GM12878 (cell line): ENCODE measurements at regions of chrX and their contacts with region 1.

Region 1: DNA sequence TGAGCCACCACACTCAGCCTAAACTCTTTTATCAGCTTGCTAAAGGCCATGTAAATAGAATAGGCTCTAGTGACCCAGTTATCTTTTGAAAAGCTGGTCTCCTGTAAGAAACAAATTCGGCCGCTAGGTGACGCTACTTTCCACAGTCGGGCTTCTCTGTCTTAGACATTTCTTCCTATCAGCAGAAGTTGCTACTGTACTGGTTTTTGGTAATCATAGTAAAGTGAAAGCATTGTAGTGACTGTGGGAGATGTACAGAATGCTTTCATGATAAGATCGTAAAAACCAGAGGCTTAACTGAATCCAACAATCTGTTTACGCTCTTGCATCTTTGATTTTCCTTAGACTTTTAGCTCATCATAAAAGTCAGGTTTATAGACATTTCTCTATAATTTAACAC is 82.6 kb downstream of the GK start:
- DNase-seq: peak; percentile 35
- ATAC-seq: peak; percentile 97
- H3K4me3 ChIP-seq: no peak overlapping the region
- H3K27ac ChIP-seq: no peak overlapping the region
- H3K4me1 ChIP-seq: no peaks in the 10 kb centered on the region
- H3K27me3 ChIP-seq: no peaks in the 10 kb centered on the region
- CTCF ChIP-seq: peak; percentile 83 to 88 (median 88)
- EP300 ChIP-seq: no peak
- POLR2A ChIP-seq: no peak
- RAD21 ChIP-seq: peak; percentile 91

Region 2: DNA sequence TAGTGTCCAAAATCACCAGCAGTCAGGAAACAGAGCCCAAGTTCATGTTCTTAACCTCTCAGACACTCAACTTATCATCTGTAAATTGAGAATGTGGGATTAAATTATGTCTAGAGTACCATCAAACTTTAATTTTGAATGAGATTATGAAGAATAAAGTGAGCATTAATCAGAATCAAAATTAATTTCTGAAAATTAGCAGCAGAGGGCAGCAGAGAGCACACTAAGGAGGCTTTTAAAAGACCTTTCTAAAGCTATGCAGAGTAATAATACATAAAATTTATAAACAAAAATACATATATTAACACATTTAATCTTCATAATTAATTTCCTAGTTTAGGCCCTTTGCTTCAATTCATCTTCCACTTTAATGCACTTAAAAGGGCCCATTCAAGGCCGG is 165.3 kb before region 1 on chrX:
- CTCF ChIA-PET with region 1: interaction called, 11 read pairs
- POLR2A ChIA-PET with region 1: no interaction called
- RAD21 ChIA-PET with region 1: interaction called, 7 read pairs
- SMC1A ChIA-PET with region 1: interaction called, 11 read pairs
- in situ Hi-C with region 1: no loop called
- intact Hi-C with region 1: no loop called
- DNase-seq: no peak
- ATAC-seq: peak; percentile 3; the same call in 1 of the 3 replicates
- H3K4me3 ChIP-seq: no peak overlapping the region
- H3K27ac ChIP-seq: no peak overlapping the region
- H3K4me1 ChIP-seq: peaks cover 19% of the 10 kb centered on the region
- H3K27me3 ChIP-seq: no peaks in the 10 kb centered on the region
- CTCF ChIP-seq: peak; percentile 33 to 57 (median 44); a peak in 5 of 6 replicates
- EP300 ChIP-seq: no peak
- POLR2A ChIP-seq: no peak
- RAD21 ChIP-seq: peak; percentile 65

Region 3: GRCh38 chrX:30713061-30713525 is 22.7 kb before region 1 on chrX:
- CTCF ChIA-PET with region 1: interaction called, 17 read pairs
- POLR2A ChIA-PET with region 1: no interaction called
- RAD21 ChIA-PET with region 1: interaction called, 4 read pairs
- SMC1A ChIA-PET with region 1: interaction called, 3 read pairs
- in situ Hi-C with region 1: no loop called
- intact Hi-C with region 1: no loop called
- DNase-seq: peak; percentile 85
- ATAC-seq: peak; percentile 94
- H3K4me3 ChIP-seq: no peak overlapping the region
- H3K27ac ChIP-seq: peak overlapping the region; percentile 51
- H3K4me1 ChIP-seq: peaks cover 13% of the 10 kb centered on the region
- H3K27me3 ChIP-seq: no peaks in the 10 kb centered on the region
- CTCF ChIP-seq: peak; percentile 27 to 40 (median 31); a peak in 5 of 6 replicates
- EP300 ChIP-seq: peak; percentile 95 to 97
- POLR2A ChIP-seq: no peak
- RAD21 ChIP-seq: peak; percentile 46; the same call in 1 of the 2 replicates

Region 4: DNA sequence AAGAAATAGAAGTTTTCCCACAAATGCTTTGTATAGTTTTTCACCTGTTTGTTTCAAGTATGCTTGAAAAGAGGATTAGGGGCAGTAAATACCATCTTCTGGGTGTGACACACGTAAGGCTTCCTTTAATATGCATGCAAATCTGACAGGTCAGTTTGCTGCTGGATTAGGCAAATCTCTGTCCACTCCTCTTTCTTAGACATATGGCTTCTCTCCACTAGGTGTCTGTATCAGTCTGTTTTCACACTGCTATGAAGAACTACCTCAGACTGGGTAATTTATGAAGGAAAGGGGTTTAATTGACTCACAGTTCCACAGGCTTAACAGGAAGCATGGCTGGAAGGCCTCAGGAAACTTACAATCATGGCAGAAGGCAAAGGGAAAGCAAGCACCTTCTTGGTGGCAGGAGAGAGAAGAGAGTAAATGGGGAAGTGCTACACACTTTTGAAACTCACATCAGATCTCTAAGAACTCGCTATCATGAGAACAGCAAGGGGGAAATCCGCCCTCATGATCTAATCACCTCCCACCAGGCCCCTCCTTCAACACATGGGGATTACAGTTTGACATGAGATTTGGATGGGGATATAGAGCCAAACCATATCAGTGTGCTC is 86.3 kb after region 1 on chrX:
- CTCF ChIA-PET with region 1: interaction called, 22 read pairs
- POLR2A ChIA-PET with region 1: no interaction called
- RAD21 ChIA-PET with region 1: interaction called, 4 read pairs
- SMC1A ChIA-PET with region 1: interaction called, 6 read pairs
- in situ Hi-C with region 1: loop called (anchors 5 kb)
- intact Hi-C with region 1: loop called (anchors 1 kb)
- DNase-seq: peak; percentile 34
- ATAC-seq: peak; percentile 94
- H3K4me3 ChIP-seq: no peak overlapping the region
- H3K27ac ChIP-seq: peak overlapping the region; percentile 37; the same call in 1 of the 2 replicates
- H3K4me1 ChIP-seq: no peaks in the 10 kb centered on the region; the same call in 1 of the 2 replicates
- H3K27me3 ChIP-seq: no peaks in the 10 kb centered on the region
- CTCF ChIP-seq: 0 out of 6 replicates have a peak, but pooled peaks of 1 of the 3 experiments have one; percentile 1
- EP300 ChIP-seq: no peak
- POLR2A ChIP-seq: no peak
- RAD21 ChIP-seq: peak; percentile 18; the same call in 1 of the 2 replicates

Region 5: DNA sequence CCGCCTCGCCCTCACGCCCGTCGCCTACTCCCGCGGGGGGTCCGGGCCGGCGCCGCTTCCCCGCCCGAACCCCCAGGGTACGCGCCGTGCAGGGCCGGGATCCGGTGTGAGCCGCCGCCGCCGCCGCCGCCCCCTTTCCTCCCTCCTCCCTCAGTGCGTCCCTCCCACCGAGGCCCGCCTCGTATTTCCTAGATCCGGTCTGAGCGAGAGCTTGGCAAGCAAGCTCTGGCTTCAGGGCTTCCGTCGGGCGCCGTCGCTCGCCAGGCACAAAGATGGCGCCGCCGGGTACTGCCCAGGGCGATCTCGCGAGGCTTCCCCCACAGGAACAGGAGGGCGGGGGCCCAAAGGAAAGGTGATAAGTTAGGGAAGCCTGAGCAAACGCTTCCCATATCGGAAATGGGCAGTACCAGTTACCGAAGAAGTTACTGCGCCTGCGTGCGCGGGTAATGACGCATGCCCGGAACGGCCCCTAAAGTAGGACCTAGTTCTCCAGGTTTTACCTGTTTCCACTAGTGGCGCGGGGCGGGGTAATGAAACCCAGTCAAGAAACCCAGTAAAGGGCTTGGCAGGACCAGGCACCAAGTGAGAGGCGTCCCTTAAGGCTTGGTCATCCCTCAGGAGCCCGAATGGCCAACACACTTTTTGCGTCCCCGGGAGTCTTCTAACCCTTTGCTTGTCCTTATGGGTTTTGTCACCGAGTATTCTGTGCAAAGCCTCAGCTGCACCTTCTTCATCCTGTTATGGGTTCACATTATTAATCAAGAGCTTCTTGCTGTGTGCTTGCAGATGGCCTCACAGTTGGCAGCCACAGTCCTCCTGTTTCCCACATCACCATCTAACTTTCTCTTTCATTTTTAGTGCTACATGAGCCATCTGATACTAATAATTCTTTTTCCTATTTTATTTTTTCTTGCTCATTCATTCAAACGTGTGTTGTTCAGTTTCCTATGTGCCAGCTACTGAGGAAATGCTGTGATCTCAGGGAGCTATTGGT is 153.6 kb after region 1 on chrX and contains the start of gene TAB3:
- CTCF ChIA-PET with region 1: interaction called, 12 read pairs
- POLR2A ChIA-PET with region 1: no interaction called
- RAD21 ChIA-PET with region 1: interaction called, 7 read pairs
- SMC1A ChIA-PET with region 1: interaction called, 8 read pairs
- in situ Hi-C with region 1: loop called (anchors 5 kb)
- intact Hi-C with region 1: loop called (anchors 5 kb)
- DNase-seq: peak; percentile 89
- ATAC-seq: peak; percentile 93
- H3K4me3 ChIP-seq: peak within 1 kb of the TSS; percentile 66
- H3K27ac ChIP-seq: peak within 1 kb of the TSS; percentile 73
- H3K4me1 ChIP-seq: no peaks in the 10 kb centered on the region
- H3K27me3 ChIP-seq: no peaks in the 10 kb centered on the region; a peak in 1 of 4 replicates
- CTCF ChIP-seq: no peak
- EP300 ChIP-seq: no peak
- POLR2A ChIP-seq: peak; percentile 53; the same call in 1 of the 2 replicates
- RAD21 ChIP-seq: no peak
- polyA plus RNA-seq, gene TAB3: 1.7 to 2.0 TPM

Region 6: DNA sequence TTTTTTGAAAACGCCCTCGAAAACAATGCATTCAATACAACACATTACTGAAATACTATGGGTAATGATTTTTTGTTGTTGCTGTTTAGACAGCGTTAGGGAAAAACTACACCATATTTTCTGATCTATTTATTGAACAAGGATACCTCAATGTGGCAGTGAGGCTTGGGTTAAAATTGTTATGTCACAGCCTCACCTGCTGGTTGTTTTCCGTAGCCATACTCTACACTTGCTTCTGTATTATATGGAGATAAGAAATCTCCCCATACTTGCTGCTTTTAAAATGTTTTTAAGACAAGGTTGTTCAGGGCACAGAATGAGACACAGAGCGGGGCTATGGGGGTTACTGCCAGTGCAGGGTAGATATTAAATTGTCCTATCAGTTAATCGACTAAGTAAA is 557.6 kb after region 1 on chrX:
- CTCF ChIA-PET with region 1: interaction called, 14 read pairs
- POLR2A ChIA-PET with region 1: no interaction called
- RAD21 ChIA-PET with region 1: no interaction called
- SMC1A ChIA-PET with region 1: no interaction called
- in situ Hi-C with region 1: no loop called
- intact Hi-C with region 1: no loop called
- DNase-seq: no peak
- ATAC-seq: peak; percentile 90
- H3K4me3 ChIP-seq: no peak overlapping the region
- H3K27ac ChIP-seq: no peak overlapping the region
- H3K4me1 ChIP-seq: no peaks in the 10 kb centered on the region
- H3K27me3 ChIP-seq: no peaks in the 10 kb centered on the region
- CTCF ChIP-seq: peak; percentile 61 to 70 (median 61)
- EP300 ChIP-seq: no peak
- POLR2A ChIP-seq: no peak
- RAD21 ChIP-seq: peak; percentile 84